Posterior cingulate gyrus (tissue), 11 donors: ENCODE measurements at regions of chr2 and their contacts with region 1.

Region 1: GRCh38 chr2:161273038-161273760 is 35.0 kb upstream of the PSMD14 start:
- DNase-seq: no peak

Region 2: DNA sequence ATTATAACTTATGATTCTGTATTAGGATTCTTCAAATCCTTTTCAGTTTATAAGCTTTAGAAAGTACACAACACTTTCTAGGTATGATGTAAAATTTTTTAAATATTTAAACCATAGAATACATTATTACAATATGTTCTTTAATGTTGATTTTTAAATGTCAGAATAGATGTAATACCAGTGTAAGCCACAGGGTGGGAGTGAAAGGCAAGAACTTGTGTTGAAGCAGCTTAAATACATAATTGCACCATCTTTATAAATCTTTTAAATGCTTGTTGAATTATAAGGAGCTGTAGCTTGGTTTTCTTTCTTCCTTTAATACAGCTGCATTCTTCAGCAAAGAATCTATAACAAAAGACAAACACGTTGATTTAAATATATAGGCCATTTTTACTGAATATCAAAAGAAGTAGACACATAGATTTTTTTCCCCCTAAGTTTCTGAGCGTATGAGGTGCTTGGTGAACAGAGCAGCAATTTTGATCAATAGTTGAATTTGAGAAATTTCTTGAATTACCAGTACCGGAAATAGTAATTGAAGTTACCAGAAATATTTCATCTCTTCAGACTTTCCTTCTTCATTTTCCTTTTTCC is 50.0 kb before region 1 on chr2:
- intact Hi-C with region 1: loop called (anchors 1 kb)
- DNase-seq: no peak

Region 3: GRCh38 chr2:161662373-161662772 is 389.2 kb after region 1 on chr2:
- intact Hi-C with region 1: no loop called
- DNase-seq: no peak